ENCODE measurements at regions of chr1 and their contacts with region 1.

Region 1: DNA sequence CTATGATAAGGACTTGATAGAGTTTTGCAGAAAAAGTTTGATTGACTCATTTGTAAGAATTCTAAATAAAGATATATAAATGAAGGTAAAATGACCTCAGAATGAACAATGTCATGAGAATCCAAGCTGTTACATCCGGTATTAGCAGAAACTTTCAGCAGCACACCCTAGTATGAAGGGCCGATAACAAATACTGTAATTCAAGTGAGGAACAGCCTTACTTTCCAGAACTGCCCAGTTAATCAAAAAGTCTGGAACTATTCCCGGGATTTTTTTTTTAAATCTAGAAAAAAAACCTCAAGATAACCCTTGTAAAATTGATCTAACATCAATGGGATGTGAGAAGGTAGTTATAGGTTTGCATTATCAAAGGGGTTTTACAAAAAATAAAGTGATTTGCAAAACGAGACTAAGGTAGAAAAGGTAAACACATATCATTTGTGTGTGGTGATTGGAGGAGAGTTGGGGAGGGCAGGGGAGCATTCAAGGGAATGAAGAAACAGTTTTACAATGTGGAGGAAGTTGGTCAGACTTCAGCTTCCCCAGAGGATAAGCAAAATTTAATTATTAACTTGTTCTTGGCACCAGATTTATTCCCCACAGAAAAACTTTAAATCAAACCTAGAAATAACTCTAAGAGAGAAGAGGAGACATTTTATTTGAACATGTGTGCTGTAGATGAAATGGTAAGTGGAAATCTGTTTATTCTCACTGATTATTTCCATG is 75.9 kb upstream of the VCAM1 start:
- DNase-seq: peak; percentile 16
- H3K4me3 Mint-ChIP-seq: peak overlapping the region; percentile 49
- H3K27ac Mint-ChIP-seq: peak overlapping the region; percentile 79
- H3K4me1 Mint-ChIP-seq: peaks cover 16% of the 10 kb centered on the region
- H3K27me3 Mint-ChIP-seq: no peaks in the 10 kb centered on the region
- CTCF ChIP-seq: no peak

Region 2: DNA sequence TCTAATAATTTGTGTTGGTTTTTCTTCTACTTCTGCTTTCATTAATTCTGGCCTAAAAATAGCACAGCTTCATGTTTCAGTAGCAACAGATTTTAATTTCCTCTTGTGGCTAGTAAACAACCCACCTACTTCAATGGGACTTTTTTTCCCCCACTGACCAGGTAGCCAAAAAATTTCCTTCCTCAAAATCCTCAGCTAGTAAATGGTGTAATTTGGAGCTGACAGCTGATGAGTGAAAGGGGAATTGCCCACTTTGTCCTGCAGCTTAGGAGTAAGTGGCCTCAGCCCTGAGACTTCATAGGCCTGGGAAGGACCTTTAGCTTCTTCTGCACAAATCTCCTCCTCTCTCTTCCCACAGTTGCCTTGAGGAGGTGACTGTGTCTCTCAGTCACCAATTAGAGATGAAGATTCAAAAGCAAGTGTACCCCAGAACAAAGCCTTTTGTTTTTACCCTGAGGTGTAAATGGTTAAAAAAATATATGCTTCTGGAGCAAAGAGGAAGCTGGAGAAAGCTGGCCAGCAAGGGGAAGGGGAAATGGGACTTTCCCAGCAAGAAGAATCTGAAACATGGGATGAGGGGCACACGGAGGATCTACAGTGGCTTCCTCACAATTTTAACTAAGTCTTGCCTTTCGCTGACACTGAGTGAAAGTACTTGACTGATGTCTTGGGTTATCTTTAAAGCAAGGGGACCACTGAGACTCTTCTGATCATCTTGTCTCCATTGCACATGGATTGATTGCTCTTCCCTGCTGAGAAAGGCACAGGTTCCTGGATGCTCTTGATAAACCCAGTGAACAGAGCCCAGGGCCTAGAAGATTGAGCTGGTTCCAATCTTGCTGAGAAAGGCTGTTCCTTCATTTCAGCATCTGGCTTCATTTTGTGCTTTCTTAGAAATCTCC is 40.1 kb after region 1 on chr1:
- CTCF ChIA-PET with region 1: no interaction called
- intact Hi-C with region 1: no loop called
- DNase-seq: no peak
- H3K4me3 Mint-ChIP-seq: no peak overlapping the region
- H3K27ac Mint-ChIP-seq: no peak overlapping the region
- H3K4me1 Mint-ChIP-seq: no peaks in the 10 kb centered on the region
- H3K27me3 Mint-ChIP-seq: no peaks in the 10 kb centered on the region
- CTCF ChIP-seq: no peak

Region 3: DNA sequence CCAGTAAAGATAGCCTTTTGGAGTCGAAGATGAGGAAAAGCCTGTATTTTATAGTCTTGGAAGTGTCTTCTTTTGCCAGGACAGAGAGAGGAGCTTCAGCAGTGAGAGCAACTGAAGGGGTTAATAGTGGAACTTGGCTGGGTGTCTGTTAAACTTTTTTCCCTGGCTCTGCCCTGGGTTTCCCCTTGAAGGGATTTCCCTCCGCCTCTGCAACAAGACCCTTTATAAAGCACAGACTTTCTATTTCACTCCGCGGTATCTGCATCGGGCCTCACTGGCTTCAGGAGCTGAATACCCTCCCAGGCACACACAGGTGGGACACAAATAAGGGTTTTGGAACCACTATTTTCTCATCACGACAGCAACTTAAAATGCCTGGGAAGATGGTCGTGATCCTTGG is 75.9 kb after region 1 on chr1 and contains the start of gene VCAM1:
- CTCF ChIA-PET with region 1: no interaction called
- intact Hi-C with region 1: loop called (anchors 10 kb)
- DNase-seq: no peak
- H3K4me3 Mint-ChIP-seq: no peak within 1 kb of the TSS
- H3K27ac Mint-ChIP-seq: no peak within 1 kb of the TSS
- H3K4me1 Mint-ChIP-seq: peaks cover 11% of the 10 kb centered on the region
- H3K27me3 Mint-ChIP-seq: no peaks in the 10 kb centered on the region
- CTCF ChIP-seq: no peak
- total RNA-seq, gene VCAM1: 0.94 and 1.4 TPM in 2 replicates

Region 4: GRCh38 chr1:100750005-100750885 is 106.6 kb after region 1 on chr1:
- CTCF ChIA-PET with region 1: no interaction called
- intact Hi-C with region 1: no loop called
- DNase-seq: no peak
- H3K4me3 Mint-ChIP-seq: no peak overlapping the region
- H3K27ac Mint-ChIP-seq: no peak overlapping the region
- H3K4me1 Mint-ChIP-seq: peaks cover 12% of the 10 kb centered on the region
- H3K27me3 Mint-ChIP-seq: no peaks in the 10 kb centered on the region
- CTCF ChIP-seq: no peak